ENCODE measurements at regions of chr2 and their contacts with region 1.

Region 1: DNA sequence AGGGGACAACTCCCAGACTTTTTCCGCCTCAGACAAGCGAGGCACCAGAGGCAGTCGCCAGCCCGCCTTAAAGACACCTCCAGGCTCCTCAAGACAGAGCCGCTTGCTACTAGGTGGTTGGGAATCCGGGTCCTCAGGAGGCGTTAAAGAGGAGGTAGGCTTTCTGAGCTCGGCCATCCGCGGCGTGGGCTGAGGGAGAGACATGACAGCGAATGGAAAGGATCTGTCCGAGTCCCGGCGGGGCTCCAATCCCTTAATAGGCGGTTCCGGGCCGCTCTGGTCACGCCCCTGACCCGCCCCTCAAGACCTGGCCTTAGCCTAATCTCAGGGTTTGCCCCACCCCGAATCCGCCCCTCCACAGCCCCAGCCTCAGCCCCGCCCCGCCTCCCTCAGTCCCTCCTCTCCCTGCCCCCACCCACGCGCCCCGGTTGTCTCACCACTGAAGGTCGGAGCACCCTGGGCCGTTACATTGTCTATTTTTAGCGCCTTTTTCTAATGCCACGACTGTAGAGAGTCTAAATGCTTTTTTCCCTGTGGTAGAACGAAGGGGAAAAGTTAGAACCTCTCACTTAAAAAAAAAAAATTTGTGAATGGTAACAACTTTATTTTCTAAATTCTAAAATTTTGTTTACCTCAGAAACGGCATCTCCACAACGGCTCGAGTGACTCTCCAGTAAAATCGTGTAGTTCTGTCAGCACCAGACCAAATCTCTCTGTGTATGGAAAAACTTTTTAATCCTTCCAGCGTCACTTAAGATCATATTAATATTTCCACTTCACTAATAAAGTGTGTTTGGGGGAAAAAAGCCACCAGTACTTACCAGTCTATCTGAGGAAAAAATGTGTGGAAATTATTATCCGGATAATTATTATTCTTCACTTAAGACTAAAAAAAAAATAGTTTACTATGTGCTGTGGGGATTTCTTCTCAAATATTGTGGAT is at the start of gene RAD51AP2:
- DNase-seq: peak; percentile 55
- H3K4me3 ChIP-seq: peak within 1 kb of the TSS; percentile 2 to 40 (median 27)
- H3K27ac ChIP-seq: no peak within 1 kb of the TSS
- H3K4me1 ChIP-seq: peaks cover 2% of the 10 kb centered on the region
- H3K27me3 ChIP-seq: peaks cover 0 to 47% of the 10 kb centered on the region in 2 experiments
- CTCF ChIP-seq: no peak
- POLR2A ChIP-seq: no peak
- total RNA-seq, gene RAD51AP2: not detected in 2 replicates

Region 2: DNA sequence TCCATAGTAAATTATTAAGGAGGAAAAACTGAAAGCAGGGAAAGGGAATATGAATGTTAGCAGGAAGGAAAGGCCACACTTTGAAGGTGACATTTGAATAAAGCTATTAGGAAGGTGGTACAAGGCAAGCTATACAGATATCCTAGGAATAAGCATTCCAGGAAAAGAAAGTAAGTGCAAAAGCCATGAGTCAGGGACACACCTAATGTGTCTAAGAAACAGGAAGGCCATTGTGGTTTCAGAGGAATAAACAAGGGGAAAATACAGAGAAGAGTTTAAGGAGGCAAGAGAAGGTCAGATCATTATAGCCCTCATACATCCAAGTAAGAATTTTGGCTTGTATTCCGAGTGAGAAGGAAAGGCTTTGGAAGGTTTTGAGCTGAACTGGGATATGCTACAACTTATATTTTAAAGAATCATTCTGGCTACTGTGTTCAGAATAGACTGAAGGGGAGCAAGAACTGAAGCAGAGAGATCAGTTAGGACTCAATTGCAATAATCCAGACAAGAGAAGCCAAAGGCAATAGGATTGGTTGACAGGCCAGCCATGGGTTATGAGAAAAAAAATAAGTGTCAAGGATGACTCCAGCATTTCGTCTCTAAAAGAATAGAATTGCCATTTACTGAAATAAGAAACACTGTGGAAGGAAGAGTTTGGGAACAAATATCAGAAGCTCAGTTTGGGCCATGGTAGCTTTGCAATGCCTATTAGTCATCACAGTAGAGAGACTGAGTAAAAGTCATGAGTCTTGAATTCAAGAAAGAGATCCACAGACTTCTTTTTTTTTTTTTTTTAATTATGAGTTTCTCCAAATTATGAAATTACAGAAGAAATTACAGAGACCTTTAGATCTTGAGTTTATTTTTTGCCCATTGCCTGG is 11.5 kb before region 1 on chr2:
- CTCF ChIA-PET with region 1: interaction called, 3 read pairs
- POLR2A ChIA-PET with region 1: no interaction called
- dilution Hi-C with region 1: no loop called
- intact Hi-C with region 1: loop called (anchors 2 kb)
- DNase-seq: no peak
- H3K4me3 ChIP-seq: no peak overlapping the region
- H3K27ac ChIP-seq: no peak overlapping the region
- H3K4me1 ChIP-seq: no peaks in the 10 kb centered on the region
- H3K27me3 ChIP-seq: peaks cover 2 to 3% of the 10 kb centered on the region in 2 experiments
- CTCF ChIP-seq: no peak
- POLR2A ChIP-seq: no peak

Region 3: GRCh38 chr2:17538844-17539554 is 20.5 kb after region 1 on chr2:
- CTCF ChIA-PET with region 1: no interaction called
- POLR2A ChIA-PET with region 1: no interaction called
- dilution Hi-C with region 1: no loop called
- intact Hi-C with region 1: loop called (anchors 1 kb)
- DNase-seq: peak; percentile 31
- H3K4me3 ChIP-seq: peak overlapping the region; percentile 26 to 78 (median 68)
- H3K27ac ChIP-seq: no peak overlapping the region
- H3K4me1 ChIP-seq: peaks cover 23% of the 10 kb centered on the region
- H3K27me3 ChIP-seq: peaks cover 46 to 67% of the 10 kb centered on the region in 2 experiments
- CTCF ChIP-seq: no peak
- POLR2A ChIP-seq: no peak

Region 4: GRCh38 chr2:17550907-17551306 is 32.4 kb after region 1 on chr2:
- CTCF ChIA-PET with region 1: no interaction called
- POLR2A ChIA-PET with region 1: no interaction called
- dilution Hi-C with region 1: no loop called
- intact Hi-C with region 1: no loop called
- DNase-seq: no peak
- H3K4me3 ChIP-seq: no peak overlapping the region
- H3K27ac ChIP-seq: no peak overlapping the region
- H3K4me1 ChIP-seq: no peaks in the 10 kb centered on the region
- H3K27me3 ChIP-seq: peaks cover 0 to 3% of the 10 kb centered on the region in 2 experiments
- CTCF ChIP-seq: no peak
- POLR2A ChIP-seq: no peak